ENCODE measurements at regions of chr10 and their contacts with region 1.

Region 1: GRCh38 chr10:119750391-119751230 is 24.8 kb downstream of the INPP5F start:
- DNase-seq: peak; percentile 47 to 58
- ATAC-seq: peak; percentile 93 to 97 (median 96)
- H3K4me3 ChIP-seq: no peak overlapping the region
- H3K27ac ChIP-seq: no peak overlapping the region
- H3K4me1 ChIP-seq: peaks cover 25% of the 10 kb centered on the region
- H3K27me3 ChIP-seq: no peaks in the 10 kb centered on the region
- CTCF ChIP-seq: peak; percentile 93

Region 2: GRCh38 chr10:119478111-119478802 is 272.4 kb before region 1 on chr10:
- intact Hi-C with region 1: no loop called
- DNase-seq: no peak
- ATAC-seq: no peak
- H3K4me3 ChIP-seq: no peak overlapping the region
- H3K27ac ChIP-seq: no peak overlapping the region
- H3K4me1 ChIP-seq: no peaks in the 10 kb centered on the region
- H3K27me3 ChIP-seq: peaks cover 0 to 33% (median 6%) of the 10 kb centered on the region in 3 donors
- CTCF ChIP-seq: no peak

Region 3: GRCh38 chr10:119715628-119716505 is 34.7 kb before region 1 on chr10:
- intact Hi-C with region 1: no loop called
- DNase-seq: no peak
- ATAC-seq: no peak
- H3K4me3 ChIP-seq: no peak overlapping the region
- H3K27ac ChIP-seq: no peak overlapping the region
- H3K4me1 ChIP-seq: peaks cover 11% of the 10 kb centered on the region
- H3K27me3 ChIP-seq: no peaks in the 10 kb centered on the region
- CTCF ChIP-seq: no peak

Region 4: DNA sequence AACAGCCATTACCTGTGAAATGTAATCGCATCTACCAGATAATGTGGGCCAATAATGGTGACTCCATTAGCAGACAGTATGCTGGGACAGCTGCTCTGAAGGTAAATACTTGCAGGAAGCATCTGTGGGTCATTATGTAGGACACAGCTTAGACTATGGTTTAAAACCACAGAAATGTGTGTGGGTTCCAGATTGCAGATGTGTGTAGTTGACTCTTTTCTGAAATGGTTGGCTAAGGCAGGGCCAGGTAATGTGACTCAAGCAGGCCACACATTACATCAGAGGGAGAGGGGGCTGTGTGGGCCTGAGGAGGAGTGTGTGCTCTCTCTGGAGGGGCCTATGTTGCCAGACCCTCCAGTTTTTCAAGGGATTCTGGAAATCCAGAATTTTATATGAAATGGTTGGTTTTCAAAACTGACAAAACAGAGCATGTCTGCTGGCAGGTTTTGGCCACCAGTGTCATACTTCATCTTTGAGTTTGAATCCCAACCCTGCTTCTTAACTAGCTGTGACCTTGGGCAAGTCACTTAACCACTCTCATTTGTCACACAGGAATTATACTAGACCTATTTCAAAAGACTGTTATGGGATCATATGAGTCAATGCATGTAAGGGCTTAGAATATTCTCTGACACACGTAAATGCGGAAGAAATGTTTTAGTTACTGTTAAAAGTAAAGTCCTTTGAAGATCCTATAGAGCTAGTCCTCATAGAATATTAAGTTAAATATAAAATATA is 57.5 kb after region 1 on chr10:
- intact Hi-C with region 1: loop called in 1 of 2 experiments (anchors 5 kb)
- DNase-seq: no peak
- ATAC-seq: no peak
- H3K4me3 ChIP-seq: no peak overlapping the region
- H3K27ac ChIP-seq: no peak overlapping the region
- H3K4me1 ChIP-seq: peaks cover 6% of the 10 kb centered on the region
- H3K27me3 ChIP-seq: no peaks in the 10 kb centered on the region
- CTCF ChIP-seq: no peak

Region 5: GRCh38 chr10:120336911-120337540 is 586.4 kb after region 1 on chr10:
- intact Hi-C with region 1: loop called in 1 of 2 experiments (anchors 10 kb)
- DNase-seq: no peak
- ATAC-seq: no peak
- H3K4me3 ChIP-seq: no peak overlapping the region
- H3K27ac ChIP-seq: no peak overlapping the region
- H3K4me1 ChIP-seq: no peaks in the 10 kb centered on the region
- H3K27me3 ChIP-seq: peaks cover 0 to 2% (median 0%) of the 10 kb centered on the region in 3 donors
- CTCF ChIP-seq: peak; percentile 43

Measured in psoas muscle (tissue), 8 donors.